Cardiac septum (tissue), 1 donor: ENCODE measurements at regions of chr5 and their contacts with region 1.

Region 1: DNA sequence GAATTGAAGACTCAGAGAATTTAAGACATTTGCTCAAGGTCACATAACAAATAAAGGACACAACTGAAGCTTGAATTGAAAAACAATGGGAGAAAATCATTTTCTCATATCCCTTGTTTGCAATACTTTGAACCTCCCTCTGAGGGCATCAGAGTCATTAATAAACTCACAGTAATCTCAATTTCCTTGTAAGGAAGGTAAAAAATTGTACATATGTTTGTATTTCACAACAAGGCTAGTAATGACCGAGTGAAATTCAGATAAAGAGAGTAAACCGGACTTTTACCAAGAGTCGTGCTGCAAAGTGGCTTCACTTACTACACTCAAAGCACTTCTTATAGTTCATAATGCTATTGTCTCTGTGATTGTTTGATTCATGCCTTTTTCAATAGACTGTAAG is 665.0 kb downstream of the NR2F1-AS1 start:
- DNase-seq: no peak

Region 2: DNA sequence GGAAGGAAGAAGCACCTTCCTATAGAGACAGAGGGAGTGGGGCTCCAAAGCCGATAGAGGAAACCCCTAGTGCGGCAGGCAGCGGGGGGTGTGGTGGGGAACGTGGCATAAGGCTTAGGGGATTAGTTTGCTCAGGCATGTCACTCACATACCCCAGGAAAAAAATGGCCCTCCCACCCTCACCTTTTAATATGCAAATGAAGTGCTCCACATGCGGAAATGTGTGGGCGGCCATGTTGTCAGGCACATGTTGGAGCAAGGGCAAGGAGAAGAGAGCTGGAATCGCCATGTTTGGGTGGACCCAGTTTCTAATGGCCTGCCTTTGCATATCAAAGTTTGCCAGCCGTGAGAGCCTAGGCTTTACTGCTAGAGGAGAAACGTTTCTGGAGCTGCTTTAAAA is 93.9 kb before region 1 on chr5:
- intact Hi-C with region 1: no loop called
- DNase-seq: no peak

Region 3: DNA sequence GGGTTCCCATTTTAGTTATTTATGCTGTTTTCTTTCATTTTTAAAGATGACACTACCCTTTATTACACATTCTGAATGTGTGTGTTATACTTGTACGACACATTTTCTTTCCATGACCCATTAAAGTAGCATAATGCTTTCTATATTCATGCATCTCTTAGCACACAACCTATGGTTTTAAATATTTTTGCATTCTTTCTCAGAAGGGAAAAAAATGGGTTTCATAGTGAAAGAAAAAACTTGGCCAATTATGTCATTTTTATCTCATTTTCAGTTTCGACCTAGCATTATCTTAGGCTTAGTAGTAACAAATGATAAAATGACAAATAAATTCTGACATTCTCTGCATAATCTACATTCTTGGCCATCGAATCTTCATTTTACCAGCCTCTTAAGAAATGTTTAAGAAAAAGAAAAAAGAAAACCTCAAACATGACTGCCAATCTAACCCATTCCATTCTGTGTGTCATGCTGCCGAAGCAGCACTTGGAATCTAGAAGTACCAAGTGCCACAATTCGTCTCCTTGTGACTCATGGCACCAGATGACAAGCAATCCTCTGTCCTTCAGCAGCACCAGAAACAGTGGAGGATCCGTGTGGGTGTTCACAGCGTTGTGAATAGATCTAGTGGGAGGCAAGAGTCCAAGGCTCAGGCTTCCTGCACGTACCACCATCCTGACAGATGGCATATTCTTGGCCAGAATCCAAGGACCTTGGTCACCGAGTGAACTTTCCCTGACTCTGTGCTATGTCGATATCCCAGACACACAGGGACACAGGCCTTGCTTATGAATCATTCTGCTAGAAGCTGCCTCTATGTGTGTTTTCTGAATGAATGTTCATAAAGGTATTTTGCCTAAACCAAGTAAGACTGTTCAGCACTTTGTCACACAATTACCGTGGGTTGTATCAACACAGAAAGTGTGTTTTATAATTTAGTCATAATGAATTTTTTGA is 162.3 kb after region 1 on chr5:
- intact Hi-C with region 1: loop called (anchors 10 kb)
- DNase-seq: peak; percentile 77